ENCODE measurements at regions of chr12 and their contacts with region 1.

Region 1: DNA sequence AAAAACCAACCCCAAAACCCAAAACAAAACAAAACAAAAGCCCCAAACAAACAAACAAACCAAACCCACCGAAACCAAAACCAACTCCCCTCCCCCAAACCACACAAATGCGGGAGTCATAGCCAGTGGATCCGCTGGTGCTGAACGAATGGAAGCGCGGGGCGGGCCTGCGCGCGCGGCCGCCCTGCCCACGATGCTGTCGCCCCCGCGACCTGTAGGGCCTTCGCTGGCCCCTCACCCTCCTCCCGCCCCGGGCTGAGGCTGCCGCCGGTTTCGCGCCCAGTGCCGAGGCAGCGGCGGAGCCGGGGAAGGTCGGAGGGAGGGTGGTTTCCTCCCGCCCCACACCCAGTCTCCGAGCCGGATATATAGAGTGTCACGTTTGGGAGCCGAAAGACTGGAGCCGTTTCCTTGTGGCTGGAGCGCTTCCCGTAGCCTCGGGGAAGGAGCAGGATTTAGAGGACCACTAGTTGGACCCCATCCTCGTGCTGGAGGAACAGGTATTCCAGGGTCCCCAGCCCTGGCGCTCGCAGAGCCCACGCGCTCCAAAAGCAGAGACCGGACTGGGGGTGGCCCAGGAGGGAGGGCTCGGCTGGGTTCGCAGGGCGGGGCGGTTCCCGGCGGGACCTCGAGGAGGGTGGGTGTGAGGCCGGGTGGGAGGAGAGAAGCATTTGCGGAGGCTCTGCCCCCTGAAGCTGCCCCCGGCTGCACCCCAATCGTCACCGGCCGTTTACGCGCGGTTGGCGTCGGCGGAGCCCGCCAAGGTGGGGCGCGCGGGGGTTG is at the start of gene FAR2:
- DNase-seq: peak; percentile 71 to 93 (median 91)
- H3K4me3 ChIP-seq: peak within 1 kb of the TSS; percentile 57 to 96 (median 90)
- H3K27ac ChIP-seq: peak within 1 kb of the TSS; percentile 93 to 96
- H3K4me1 ChIP-seq: peaks cover 40 to 63% (median 56%) of the 10 kb centered on the region in 4 experiments
- H3K27me3 ChIP-seq: no peaks in the 10 kb centered on the region

Region 2: DNA sequence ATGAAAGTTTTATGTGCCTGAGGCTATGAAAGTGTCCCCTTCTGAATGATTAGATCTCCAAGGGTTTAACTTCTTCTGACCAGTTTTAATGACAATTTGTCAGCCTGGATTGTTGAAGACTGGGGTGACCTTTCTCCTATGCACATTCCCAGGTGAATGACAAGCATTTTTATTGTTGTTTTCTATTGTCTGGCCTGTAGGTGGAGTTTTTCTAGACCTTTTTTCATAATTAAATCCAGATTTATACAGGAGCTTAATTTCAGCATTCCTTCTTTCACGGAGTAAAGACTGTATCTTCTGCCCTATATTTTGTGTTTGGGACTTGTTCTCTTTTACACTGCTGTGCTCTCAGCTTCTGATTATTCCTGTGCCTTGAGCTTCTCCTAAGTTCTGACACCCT is 125.0 kb before region 1 on chr12:
- CTCF ChIA-PET with region 1: no interaction called
- POLR2A ChIA-PET with region 1: no interaction called
- DNase-seq: peak; percentile 3 to 14 (median 9)
- H3K4me3 ChIP-seq: no peak overlapping the region
- H3K27ac ChIP-seq: no peak overlapping the region
- H3K4me1 ChIP-seq: no peaks in the 10 kb centered on the region
- H3K27me3 ChIP-seq: peaks cover 0 to 2% (median 0%) of the 10 kb centered on the region in 5 experiments

Region 3: GRCh38 chr12:29088611-29089219 is 60.4 kb before region 1 on chr12:
- CTCF ChIA-PET with region 1: no interaction called
- POLR2A ChIA-PET with region 1: no interaction called
- DNase-seq: peak in 1 of 3 donors; percentile 33
- H3K4me3 ChIP-seq: no peak overlapping the region
- H3K27ac ChIP-seq: no peak overlapping the region
- H3K4me1 ChIP-seq: no peaks in the 10 kb centered on the region
- H3K27me3 ChIP-seq: no peaks in the 10 kb centered on the region

Region 4: DNA sequence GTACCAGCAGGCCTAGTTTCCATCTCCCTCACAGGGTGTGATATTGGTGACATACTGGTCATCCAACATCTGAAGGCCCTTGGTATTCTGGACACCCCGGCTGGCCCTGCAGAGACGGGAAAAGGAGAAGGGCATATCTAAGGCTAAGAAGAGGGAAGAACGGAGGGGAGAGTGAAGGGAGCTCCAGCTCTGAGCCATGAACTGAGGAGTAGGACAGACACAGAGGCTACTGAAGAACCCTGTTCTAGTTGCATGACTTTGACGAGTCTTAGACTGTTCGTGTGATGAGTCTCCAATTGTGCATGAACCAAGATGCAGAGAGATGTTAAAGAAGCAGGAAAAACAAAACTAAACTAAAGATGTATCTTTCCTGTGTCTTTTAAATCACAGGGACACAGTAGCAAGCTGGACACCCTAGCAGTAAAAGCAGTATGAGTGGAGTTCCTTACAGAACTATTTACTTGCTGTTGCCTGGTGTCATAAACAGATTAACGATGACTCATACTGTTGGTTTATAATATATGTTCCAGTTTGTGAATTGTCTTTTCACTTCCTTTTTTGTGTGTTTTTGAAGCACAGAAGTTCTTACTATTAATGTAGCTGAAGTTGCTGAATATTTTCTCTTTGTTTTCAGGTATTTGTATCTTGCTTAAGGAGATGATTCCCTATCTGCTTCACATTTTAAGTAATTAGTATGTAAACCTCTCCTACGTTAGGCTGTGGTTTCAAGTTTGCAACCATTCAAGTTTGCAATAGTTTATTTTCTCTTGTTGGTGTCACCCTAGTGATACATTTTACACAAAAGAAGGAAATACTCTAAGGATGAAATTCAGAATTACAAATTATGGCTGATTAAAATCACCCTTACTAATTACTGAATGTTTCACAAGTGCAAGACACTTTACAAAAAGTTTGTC is 15.6 kb after region 1 on chr12:
- CTCF ChIA-PET with region 1: interaction called, 10 read pairs
- POLR2A ChIA-PET with region 1: interaction called, 10 read pairs
- DNase-seq: peak; percentile 86 to 96 (median 90)
- H3K4me3 ChIP-seq: peak overlapping the region in 3 of 7 experiments; percentile 29 to 34 (median 31)
- H3K27ac ChIP-seq: peak overlapping the region; percentile 98 to 99
- H3K4me1 ChIP-seq: peaks cover 22 to 72% (median 52%) of the 10 kb centered on the region in 4 experiments
- H3K27me3 ChIP-seq: no peaks in the 10 kb centered on the region

Measured in common myeloid progenitor, CD34-positive (primary cell).